Panc1 (cell line): ENCODE measurements at regions of chr9 and their contacts with region 1.

Region 1: GRCh38 chr9:137200311-137201204 is at the start of gene TPRN:
- DNase-seq: peak; percentile 78
- ATAC-seq: peak; percentile 92
- H3K4me3 ChIP-seq: peak within 1 kb of the TSS; percentile 60 to 63
- H3K27ac ChIP-seq: peak within 1 kb of the TSS; percentile 65
- H3K4me1 ChIP-seq: peaks cover 32% of the 10 kb centered on the region
- H3K27me3 ChIP-seq: no peaks in the 10 kb centered on the region
- CTCF ChIP-seq: no peak
- total RNA-seq, gene TPRN: 21.7 TPM

Region 2: DNA sequence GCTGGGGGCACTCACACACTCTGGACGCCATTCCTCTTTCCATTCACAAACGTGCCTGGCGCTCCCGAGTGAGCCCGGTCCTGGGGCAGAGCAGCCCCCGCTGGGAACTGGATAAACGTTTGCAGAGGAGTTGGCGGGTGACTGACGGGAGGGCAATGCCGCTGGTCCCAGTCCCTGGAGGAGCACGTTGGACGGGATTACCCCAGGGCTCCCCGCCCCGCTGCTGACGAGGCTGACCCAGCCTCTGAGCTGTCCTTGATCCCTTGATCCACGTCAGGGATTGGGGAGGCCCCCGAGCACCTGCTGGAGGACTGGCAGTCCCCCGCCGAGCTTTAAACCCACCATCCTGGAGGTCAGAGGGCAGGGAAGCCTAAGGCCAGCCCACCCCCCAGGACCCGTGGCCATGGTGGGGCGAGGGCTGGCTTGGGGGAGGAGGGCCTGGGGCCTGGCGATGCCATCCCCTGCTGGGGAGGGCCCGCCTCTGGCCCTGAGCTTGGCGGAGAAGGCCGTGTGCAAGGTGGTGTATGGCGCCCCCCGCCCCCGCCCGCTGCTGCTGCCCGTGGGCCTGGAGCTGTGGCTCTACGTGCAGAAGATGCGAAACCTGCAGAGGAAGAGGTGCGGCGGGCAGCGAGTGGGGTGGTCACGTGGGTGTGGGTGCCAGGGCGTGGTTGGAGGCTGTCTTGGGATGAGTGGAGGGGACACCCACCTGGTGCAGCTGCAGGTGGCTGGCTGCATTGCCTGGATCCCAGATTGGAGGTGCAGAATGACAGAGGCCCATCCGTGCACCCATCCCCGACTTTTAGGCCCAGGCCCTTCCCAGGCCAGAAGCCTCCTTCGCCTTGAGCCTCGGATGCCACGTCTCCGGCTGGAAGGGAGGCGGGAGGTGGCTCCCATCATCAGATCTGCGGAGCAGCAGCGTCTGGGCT is 868.7 kb before region 1 on chr9:
- CTCF ChIA-PET with region 1: interaction called, 20 read pairs
- POLR2A ChIA-PET with region 1: no interaction called
- in situ Hi-C with region 1: no loop called
- intact Hi-C with region 1: no loop called
- DNase-seq: no peak
- ATAC-seq: no peak
- H3K4me3 ChIP-seq: no peak overlapping the region
- H3K27ac ChIP-seq: no peak overlapping the region
- H3K4me1 ChIP-seq: no peaks in the 10 kb centered on the region; the same call in 1 of the 2 replicates
- H3K27me3 ChIP-seq: no peaks in the 10 kb centered on the region
- CTCF ChIP-seq: no peak